Activated CD4-positive, alpha-beta memory T cell treated with anti-CD3 and anti-CD28 coated beads, Interleukin-2, amount 10 ng/mL, durations not matched to agents 7 days and 5 days (primary cell): ENCODE measurements at regions of chr1 and their contacts with region 1.

Region 1: GRCh38 chr1:108559215-108560186 is at the start of gene EEIG2:
- DNase-seq: peak; percentile 93
- H3K4me3 Mint-ChIP-seq: peak within 1 kb of the TSS; percentile 95
- H3K27ac Mint-ChIP-seq: peak within 1 kb of the TSS; percentile 86
- H3K4me1 Mint-ChIP-seq: peaks cover 34% of the 10 kb centered on the region
- H3K27me3 Mint-ChIP-seq: peaks cover 12% of the 10 kb centered on the region
- total RNA-seq, gene EEIG2: 22.6 to 23.6 TPM

Region 2: DNA sequence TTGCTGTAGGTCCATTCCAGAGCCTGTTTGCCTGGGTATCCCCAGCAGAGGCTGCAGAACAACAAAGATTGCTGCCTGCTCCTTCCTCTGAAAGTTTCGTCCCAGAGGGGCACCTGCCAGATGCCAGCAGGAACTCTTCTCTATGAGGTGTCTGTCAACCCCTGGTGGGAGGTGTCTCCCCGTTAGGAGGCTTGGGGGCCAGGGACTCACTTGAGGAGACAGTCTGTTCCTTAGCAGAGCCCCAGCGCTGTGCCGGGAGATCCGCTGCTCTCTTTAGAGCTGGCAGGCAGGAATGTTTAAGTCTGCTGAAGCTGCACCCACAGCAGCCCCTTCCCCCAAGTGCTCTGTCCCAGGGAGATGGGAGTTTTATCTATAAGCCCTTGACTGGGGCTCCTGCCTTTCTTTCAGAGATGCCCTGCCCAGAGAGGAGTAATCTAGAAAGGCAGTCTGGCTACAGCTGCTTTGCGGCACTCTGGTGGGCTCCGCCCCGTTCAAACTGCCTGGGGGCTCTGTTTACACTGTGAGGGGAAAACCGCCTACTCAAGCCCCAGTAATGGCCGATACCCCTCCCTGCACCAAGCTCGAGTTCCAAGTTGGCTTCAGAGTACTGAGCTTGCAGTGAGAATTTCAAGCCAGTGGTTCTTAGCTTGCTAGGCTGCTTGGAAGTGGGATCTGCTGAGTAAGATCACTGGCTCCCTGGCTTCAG is 350.6 kb before region 1 on chr1:
- CTCF ChIA-PET with region 1: interaction called, 10 read pairs
- POLR2A ChIA-PET with region 1: no interaction called
- DNase-seq: no peak
- H3K4me3 Mint-ChIP-seq: no peak overlapping the region
- H3K27ac Mint-ChIP-seq: no peak overlapping the region
- H3K4me1 Mint-ChIP-seq: peaks cover 13% of the 10 kb centered on the region
- H3K27me3 Mint-ChIP-seq: peaks cover 65% of the 10 kb centered on the region

Region 3: GRCh38 chr1:108512239-108512981 is 47.1 kb before region 1 on chr1:
- CTCF ChIA-PET with region 1: interaction called, 79 read pairs
- POLR2A ChIA-PET with region 1: interaction called, 15 read pairs
- DNase-seq: no peak
- H3K4me3 Mint-ChIP-seq: no peak overlapping the region
- H3K27ac Mint-ChIP-seq: no peak overlapping the region
- H3K4me1 Mint-ChIP-seq: no peaks in the 10 kb centered on the region
- H3K27me3 Mint-ChIP-seq: peaks cover 49% of the 10 kb centered on the region

Region 4: GRCh38 chr1:108570128-108570527 is 10.6 kb after region 1 on chr1:
- CTCF ChIA-PET with region 1: interaction called, 25 read pairs
- POLR2A ChIA-PET with region 1: interaction called, 4 read pairs
- DNase-seq: peak; percentile 37
- H3K4me3 Mint-ChIP-seq: no peak overlapping the region
- H3K27ac Mint-ChIP-seq: no peak overlapping the region
- H3K4me1 Mint-ChIP-seq: no peaks in the 10 kb centered on the region
- H3K27me3 Mint-ChIP-seq: no peaks in the 10 kb centered on the region

Region 5: GRCh38 chr1:108600504-108600903 is 41.0 kb after region 1 on chr1:
- CTCF ChIA-PET with region 1: no interaction called
- POLR2A ChIA-PET with region 1: no interaction called
- DNase-seq: no peak
- H3K4me3 Mint-ChIP-seq: no peak overlapping the region
- H3K27ac Mint-ChIP-seq: no peak overlapping the region
- H3K4me1 Mint-ChIP-seq: no peaks in the 10 kb centered on the region
- H3K27me3 Mint-ChIP-seq: no peaks in the 10 kb centered on the region

Region 6: GRCh38 chr1:108661030-108661620 is 101.6 kb after region 1 on chr1 and contains the start of gene HENMT1:
- CTCF ChIA-PET with region 1: interaction called, 3 read pairs
- POLR2A ChIA-PET with region 1: interaction called, 25 read pairs
- DNase-seq: peak; percentile 82
- H3K4me3 Mint-ChIP-seq: peak within 1 kb of the TSS; percentile 78
- H3K27ac Mint-ChIP-seq: peak within 1 kb of the TSS; percentile 90
- H3K4me1 Mint-ChIP-seq: peaks cover 45% of the 10 kb centered on the region
- H3K27me3 Mint-ChIP-seq: no peaks in the 10 kb centered on the region
- total RNA-seq, gene HENMT1: 26.7 to 27.3 TPM

Region 7: GRCh38 chr1:108678706-108679105 is 119.2 kb after region 1 on chr1:
- CTCF ChIA-PET with region 1: no interaction called
- POLR2A ChIA-PET with region 1: no interaction called
- DNase-seq: no peak
- H3K4me3 Mint-ChIP-seq: no peak overlapping the region
- H3K27ac Mint-ChIP-seq: no peak overlapping the region
- H3K4me1 Mint-ChIP-seq: peaks cover 13% of the 10 kb centered on the region
- H3K27me3 Mint-ChIP-seq: peaks cover 5% of the 10 kb centered on the region